Activated CD4-positive, alpha-beta memory T cell treated with anti-CD3 and anti-CD28 coated beads for 36 hours (primary cell): ENCODE measurements at regions of chr10 and their contacts with region 1.

Region 1: GRCh38 chr10:68156373-68157185 is 47.3 kb downstream of the MYPN start:
- DNase-seq: peak; percentile 64
- H3K4me3 Mint-ChIP-seq: no peak overlapping the region
- H3K27ac Mint-ChIP-seq: no peak overlapping the region
- H3K4me1 Mint-ChIP-seq: peaks cover 1% of the 10 kb centered on the region
- H3K27me3 Mint-ChIP-seq: peaks cover 2% of the 10 kb centered on the region

Region 2: DNA sequence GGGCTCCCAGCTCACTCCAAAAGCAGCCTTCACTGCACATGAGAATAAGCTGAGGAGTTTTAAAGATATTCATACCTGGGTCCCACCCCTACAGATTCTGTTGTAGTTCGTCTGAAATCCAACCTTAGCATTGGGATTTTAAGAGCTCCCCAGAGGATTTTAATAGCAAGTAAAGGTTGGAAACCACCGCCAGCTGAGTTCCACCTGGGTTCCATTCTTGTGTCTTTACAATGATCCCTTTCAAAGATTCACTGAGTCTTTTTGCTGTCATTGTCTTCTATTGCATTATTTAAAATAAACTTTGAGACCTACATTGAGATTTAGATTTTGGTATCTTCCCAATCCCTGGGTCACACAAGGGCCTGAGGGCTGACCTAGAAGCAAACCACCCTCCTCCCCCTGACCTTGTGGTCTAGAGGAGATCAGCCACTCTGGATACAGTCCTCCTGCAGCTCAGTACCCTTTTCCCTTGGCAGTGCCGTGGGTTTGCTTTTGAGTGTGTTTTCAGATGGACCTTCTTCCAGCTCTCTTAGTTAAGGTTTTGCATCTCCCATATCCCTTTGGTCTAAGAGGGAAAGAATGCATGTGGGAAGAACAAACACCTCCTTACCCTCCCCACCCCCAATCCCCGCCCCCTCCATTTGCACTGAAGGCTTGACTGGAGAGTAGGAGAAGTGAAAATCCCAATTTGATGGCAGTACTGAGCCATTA is 294.7 kb before region 1 on chr10:
- CTCF ChIA-PET with region 1: interaction called, 128 read pairs
- POLR2A ChIA-PET with region 1: no interaction called
- intact Hi-C with region 1: no loop called
- DNase-seq: no peak
- H3K4me3 Mint-ChIP-seq: no peak overlapping the region
- H3K27ac Mint-ChIP-seq: no peak overlapping the region
- H3K4me1 Mint-ChIP-seq: no peaks in the 10 kb centered on the region
- H3K27me3 Mint-ChIP-seq: no peaks in the 10 kb centered on the region

Region 3: DNA sequence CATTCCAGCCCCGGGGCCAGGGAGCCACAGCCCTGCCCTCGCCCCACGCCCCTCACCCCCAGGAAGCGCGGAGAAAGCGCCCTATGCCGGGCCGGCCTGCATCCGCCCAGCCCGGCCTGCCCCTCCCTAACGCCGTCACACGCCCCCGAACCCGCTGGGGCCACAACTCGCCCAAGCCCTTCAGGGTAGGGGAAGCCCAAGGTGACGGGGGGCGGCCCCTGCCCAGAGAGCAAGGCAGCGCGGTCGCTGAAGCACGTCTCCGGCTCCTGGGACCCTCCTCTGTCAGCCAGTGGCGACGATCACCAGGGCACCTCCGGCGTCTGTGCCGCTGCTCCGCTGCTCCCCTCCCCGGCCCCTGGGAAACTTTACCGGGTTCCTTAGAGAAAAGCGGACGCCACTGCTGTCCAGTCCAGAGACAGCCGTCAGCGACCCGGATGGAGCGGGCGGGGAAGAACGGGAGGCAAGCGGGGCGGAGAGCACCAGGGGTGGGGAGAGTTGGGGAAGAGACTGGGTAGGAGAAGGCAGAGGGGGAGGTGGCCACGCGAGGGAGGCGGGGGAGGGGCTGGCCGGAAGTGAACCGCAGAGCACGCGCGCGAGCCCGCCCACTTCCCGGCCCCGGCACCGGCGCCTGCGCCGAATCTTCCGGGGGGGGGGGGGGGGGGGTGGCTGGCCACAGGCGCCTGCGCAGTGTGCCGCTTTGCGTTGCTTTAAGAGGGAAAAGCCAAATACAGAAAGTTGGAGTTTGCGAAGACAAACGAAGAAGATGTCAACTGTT is 81.6 kb before region 1 on chr10 and contains the start of gene HERC4:
- CTCF ChIA-PET with region 1: interaction called, 4 read pairs
- POLR2A ChIA-PET with region 1: no interaction called
- intact Hi-C with region 1: loop called (anchors 2 kb)
- DNase-seq: peak; percentile 94
- H3K4me3 Mint-ChIP-seq: peak within 1 kb of the TSS; percentile 89
- H3K27ac Mint-ChIP-seq: peak within 1 kb of the TSS; percentile 89
- H3K4me1 Mint-ChIP-seq: peaks cover 35% of the 10 kb centered on the region
- H3K27me3 Mint-ChIP-seq: no peaks in the 10 kb centered on the region
- total RNA-seq, gene HERC4: 55.7 to 59.0 TPM

Region 4: DNA sequence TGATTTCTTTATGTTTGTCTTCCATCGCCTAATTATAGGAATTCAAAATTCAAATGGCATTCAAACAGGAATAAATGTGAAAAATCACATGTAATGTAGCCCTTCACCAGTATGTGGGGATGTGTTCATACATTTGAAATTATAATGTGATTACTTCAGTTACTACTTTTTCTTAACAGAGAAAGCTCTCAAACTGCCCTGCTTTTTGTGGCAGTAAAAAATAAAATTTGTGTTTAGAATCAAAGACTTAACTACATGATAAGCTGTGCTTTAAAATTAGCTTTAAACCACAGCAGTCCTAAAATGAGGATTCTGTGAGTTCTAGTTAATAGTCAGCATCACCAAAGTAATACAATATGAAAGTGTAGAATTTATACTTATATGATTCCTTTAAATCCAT is 73.7 kb before region 1 on chr10:
- CTCF ChIA-PET with region 1: interaction called, 24 read pairs
- POLR2A ChIA-PET with region 1: no interaction called
- intact Hi-C with region 1: loop called (anchors 1 kb)
- DNase-seq: no peak
- H3K4me3 Mint-ChIP-seq: no peak overlapping the region
- H3K27ac Mint-ChIP-seq: no peak overlapping the region
- H3K4me1 Mint-ChIP-seq: no peaks in the 10 kb centered on the region
- H3K27me3 Mint-ChIP-seq: no peaks in the 10 kb centered on the region